PC-3 (cell line): ENCODE measurements at regions of chr10 and their contacts with region 1.

Region 1: DNA sequence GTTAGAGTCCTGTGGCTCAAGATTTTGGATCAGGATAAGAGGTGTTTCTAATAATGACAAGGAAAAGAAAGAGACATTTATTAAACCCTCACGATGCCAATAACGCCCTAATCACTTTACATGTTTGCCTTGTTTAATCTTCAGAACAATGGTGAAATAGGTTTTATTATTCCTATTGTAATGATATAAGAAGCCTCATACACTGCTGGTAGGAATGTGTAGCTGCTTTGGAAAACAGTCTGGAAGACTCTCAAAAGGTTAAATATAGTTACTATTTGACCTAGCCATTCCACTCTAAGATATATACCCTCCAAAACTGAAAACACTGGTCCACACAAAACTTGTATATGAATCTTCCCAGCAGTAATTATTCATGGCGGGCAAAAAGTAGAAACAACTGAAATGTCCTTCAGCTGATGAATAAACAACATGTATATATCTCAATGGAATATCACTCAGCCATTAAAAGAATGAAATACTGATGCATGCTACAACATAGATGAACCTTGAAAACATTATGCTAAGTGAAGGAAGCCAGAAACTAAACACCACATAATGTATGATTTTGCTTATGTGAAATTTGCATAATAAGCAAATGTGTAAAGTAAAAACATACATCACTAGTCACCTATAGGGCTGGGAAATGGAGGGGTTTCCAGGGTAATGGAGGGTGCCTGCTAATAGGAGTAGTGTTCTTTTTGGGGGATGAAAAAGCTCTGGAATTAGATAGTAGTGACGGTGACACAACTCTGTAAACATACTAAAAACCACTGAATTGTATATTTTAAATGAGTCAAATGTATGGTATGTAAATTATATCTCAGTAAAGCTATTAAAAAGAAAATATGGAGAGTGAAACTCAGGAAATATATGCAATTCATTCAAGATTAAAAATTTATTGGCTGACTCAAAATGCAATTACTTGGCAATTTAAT is 76.9 kb upstream of the ANK3 start:
- DNase-seq: peak; percentile 99
- ATAC-seq: peak; percentile 80
- H3K4me3 ChIP-seq: peak overlapping the region; percentile 58
- H3K27ac ChIP-seq: peak overlapping the region; percentile 93
- H3K4me1 ChIP-seq: peaks cover 51% of the 10 kb centered on the region
- H3K27me3 ChIP-seq: no peaks in the 10 kb centered on the region
- CTCF ChIP-seq: no peak; the same call in 1 of the 2 replicates

Region 2: GRCh38 chr10:60314069-60314940 is 152.2 kb before region 1 on chr10:
- CTCF ChIA-PET with region 1: interaction called, 13 read pairs
- POLR2A ChIA-PET with region 1: no interaction called
- intact Hi-C with region 1: no loop called
- DNase-seq: peak; percentile 82
- ATAC-seq: peak; percentile 77
- H3K4me3 ChIP-seq: peak overlapping the region; percentile 11; the same call in 1 of the 2 replicates
- H3K27ac ChIP-seq: peak overlapping the region; percentile 76
- H3K4me1 ChIP-seq: peaks cover 36% of the 10 kb centered on the region
- H3K27me3 ChIP-seq: no peaks in the 10 kb centered on the region
- CTCF ChIP-seq: no peak

Region 3: GRCh38 chr10:60508037-60508436 is 41.5 kb after region 1 on chr10:
- CTCF ChIA-PET with region 1: no interaction called
- POLR2A ChIA-PET with region 1: interaction called, 21 read pairs
- intact Hi-C with region 1: no loop called
- DNase-seq: no peak
- ATAC-seq: no peak
- H3K4me3 ChIP-seq: no peak overlapping the region
- H3K27ac ChIP-seq: no peak overlapping the region
- H3K4me1 ChIP-seq: no peaks in the 10 kb centered on the region
- H3K27me3 ChIP-seq: no peaks in the 10 kb centered on the region
- CTCF ChIP-seq: no peak

Region 4: GRCh38 chr10:60572511-60573194 is 106.1 kb after region 1 on chr10:
- CTCF ChIA-PET with region 1: interaction called, 6 read pairs
- POLR2A ChIA-PET with region 1: no interaction called
- intact Hi-C with region 1: loop called (anchors 2 kb)
- DNase-seq: peak; percentile 95
- ATAC-seq: peak; percentile 84
- H3K4me3 ChIP-seq: peak overlapping the region; percentile 70
- H3K27ac ChIP-seq: peak overlapping the region; percentile 48
- H3K4me1 ChIP-seq: peaks cover 65% of the 10 kb centered on the region
- H3K27me3 ChIP-seq: no peaks in the 10 kb centered on the region
- CTCF ChIP-seq: 0 out of 2 replicates have a peak, but pooled peaks have one; percentile 11

Region 5: DNA sequence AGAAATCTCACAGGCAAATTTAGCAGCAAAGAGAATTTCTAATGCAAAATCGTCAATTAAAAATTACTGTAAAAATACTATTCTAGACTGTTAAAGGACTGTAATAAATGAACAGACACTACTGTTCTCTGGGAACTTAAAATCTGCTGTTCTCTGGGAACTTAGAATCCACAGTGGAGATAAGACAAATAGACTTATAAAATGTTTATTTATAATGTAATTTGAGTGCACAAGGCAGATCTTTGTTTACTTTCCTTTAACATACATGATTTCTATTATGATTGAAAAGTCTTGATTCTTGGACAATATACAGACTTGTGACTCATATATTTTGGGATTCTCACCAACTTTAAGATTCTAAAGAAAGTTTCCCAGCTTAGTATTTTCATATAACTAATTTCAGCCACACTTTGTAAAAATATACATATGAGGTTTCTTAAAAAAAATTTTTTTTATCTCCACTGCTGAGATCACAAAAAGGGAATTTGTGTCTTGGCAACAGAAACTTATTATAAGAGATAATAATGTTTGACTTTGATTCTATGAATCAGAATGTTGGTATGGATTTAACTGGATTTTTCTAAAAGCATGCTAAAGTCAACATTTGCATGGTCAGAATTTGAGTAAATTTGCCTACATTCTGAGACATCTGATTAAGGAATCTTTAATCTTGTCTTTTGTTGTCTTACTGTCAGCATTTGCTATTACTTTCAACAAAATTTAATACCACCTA is 643.8 kb after region 1 on chr10:
- CTCF ChIA-PET with region 1: no interaction called
- POLR2A ChIA-PET with region 1: no interaction called
- intact Hi-C with region 1: loop called (anchors 10 kb)
- DNase-seq: peak; percentile 92
- ATAC-seq: peak; percentile 79
- H3K4me3 ChIP-seq: 0 out of 2 replicates have a peak overlapping the region, but pooled peaks have one; percentile 3
- H3K27ac ChIP-seq: peak overlapping the region; percentile 63
- H3K4me1 ChIP-seq: peaks cover 24% of the 10 kb centered on the region
- H3K27me3 ChIP-seq: no peaks in the 10 kb centered on the region
- CTCF ChIP-seq: no peak